Naive thymus-derived CD4-positive, alpha-beta T cell (primary cell): ENCODE measurements at regions of chrX and their contacts with region 1.

Region 1: GRCh38 chrX:132071260-132071659 is 48.2 kb downstream of the STK26 start:
- DNase-seq: peak in 2 of 9 donors; percentile 9 to 18
- ATAC-seq: no peak
- H3K4me3 ChIP-seq: no peak overlapping the region
- H3K4me3 Mint-ChIP-seq: no peak overlapping the region
- H3K27ac ChIP-seq: no peak overlapping the region
- H3K27ac Mint-ChIP-seq: no peak overlapping the region
- H3K4me1 ChIP-seq: no peaks in the 10 kb centered on the region
- H3K4me1 Mint-ChIP-seq: peaks cover 0 to 3% (median 0%) of the 10 kb centered on the region in 7 donors
- H3K27me3 ChIP-seq: no peaks in the 10 kb centered on the region
- H3K27me3 Mint-ChIP-seq: no peaks in the 10 kb centered on the region

Region 2: DNA sequence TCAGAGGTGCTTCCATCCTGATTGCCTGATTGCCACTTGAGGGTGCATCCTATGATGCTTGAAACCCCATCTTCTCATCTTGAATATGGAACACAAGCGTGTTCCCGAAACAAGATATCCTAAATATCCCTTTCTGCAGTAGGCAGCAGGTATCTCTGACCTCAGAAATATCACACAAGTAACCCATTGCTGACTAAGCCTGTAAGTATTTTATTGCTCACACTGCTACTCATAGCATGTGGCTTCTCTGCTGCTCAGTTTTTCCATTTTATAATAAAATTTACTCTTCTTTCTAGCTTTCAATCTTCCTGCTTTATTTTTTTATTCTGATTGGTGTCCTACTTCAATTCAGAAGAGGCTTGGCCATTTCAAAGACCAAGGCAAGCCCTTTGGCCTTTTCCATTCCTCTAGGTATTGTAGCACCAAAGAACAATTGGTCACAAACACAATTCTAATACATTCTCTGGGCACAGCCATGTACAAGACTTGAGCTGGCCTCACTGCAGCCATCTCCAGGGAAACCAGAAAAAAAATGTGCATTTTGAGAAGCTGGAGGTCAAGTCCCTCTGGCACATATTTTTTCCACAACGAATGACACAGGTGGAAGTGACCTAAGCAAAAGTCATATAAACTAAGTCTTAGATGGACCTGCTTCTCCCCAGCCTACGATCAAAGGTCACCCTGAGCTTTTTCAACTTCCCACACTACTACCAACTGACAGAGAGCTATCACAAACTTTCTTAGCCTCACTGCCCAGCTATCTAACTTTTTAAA is 420.4 kb before region 1 on chrX:
- CTCF ChIA-PET with region 1: no interaction called
- POLR2A ChIA-PET with region 1: no interaction called
- intact Hi-C with region 1: no loop called
- DNase-seq: no peak
- ATAC-seq: no peak
- H3K4me3 ChIP-seq: no peak overlapping the region
- H3K4me3 Mint-ChIP-seq: no peak overlapping the region
- H3K27ac ChIP-seq: no peak overlapping the region
- H3K27ac Mint-ChIP-seq: no peak overlapping the region
- H3K4me1 ChIP-seq: no peaks in the 10 kb centered on the region
- H3K4me1 Mint-ChIP-seq: no peaks in the 10 kb centered on the region
- H3K27me3 ChIP-seq: no peaks in the 10 kb centered on the region
- H3K27me3 Mint-ChIP-seq: peaks cover 0 to 14% (median 8%) of the 10 kb centered on the region in 5 donors

Region 3: DNA sequence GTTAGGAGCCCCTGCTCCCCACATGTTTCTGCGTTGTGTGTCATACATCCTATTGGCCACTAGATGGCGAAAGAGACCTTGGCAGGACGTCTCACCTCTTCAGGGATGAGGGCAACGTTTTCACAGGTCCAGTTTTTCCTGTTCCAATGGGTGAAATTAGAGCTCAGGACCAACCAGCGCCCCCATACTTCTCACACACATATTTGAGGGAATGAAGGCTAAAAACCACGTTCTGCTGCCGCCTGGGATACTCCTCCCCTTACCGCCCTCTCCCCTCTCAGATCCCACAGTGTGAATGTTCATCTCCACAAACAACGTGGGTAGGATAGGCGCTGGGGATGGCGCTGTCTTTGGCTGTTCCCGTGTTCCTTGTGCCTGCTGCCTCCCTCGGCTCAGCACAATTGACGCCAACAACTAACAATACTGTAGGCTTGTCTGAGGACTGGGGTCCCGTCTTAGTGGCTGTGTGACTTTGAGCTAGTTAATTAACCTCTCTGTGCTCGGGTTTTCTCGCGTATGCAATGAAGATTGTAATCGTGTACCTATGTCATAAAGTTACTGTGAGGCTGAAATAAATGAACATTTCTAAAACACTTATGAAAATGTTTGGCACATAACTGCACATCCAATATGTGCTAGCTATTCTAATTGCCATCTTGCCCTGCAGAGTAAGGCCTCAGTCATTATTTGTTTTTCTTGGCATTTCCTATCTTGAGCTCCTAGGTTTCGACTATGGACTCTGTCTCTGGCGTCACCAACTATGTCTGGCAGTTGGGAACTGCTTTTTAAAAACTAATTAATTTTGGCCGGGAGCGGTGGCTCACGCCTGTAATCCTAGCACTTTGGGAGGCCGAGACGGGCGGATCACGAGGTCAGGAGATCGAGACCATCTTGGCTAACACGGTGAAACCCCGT is 229.5 kb before region 1 on chrX:
- CTCF ChIA-PET with region 1: interaction called, 5 read pairs
- POLR2A ChIA-PET with region 1: no interaction called
- intact Hi-C with region 1: loop called (anchors 1 to 2 kb)
- DNase-seq: peak in 8 of 9 donors; percentile 5 to 67 (median 49)
- ATAC-seq: peak; percentile 81
- H3K4me3 ChIP-seq: no peak overlapping the region
- H3K4me3 Mint-ChIP-seq: peak overlapping the region in 1 of 10 donors; percentile 56
- H3K27ac ChIP-seq: no peak overlapping the region
- H3K27ac Mint-ChIP-seq: no peak overlapping the region
- H3K4me1 ChIP-seq: no peaks in the 10 kb centered on the region
- H3K4me1 Mint-ChIP-seq: peaks cover 0 to 9% (median 0%) of the 10 kb centered on the region in 7 donors
- H3K27me3 ChIP-seq: no peaks in the 10 kb centered on the region
- H3K27me3 Mint-ChIP-seq: peaks cover 0 to 2% (median 0%) of the 10 kb centered on the region in 5 donors

Region 4: GRCh38 chrX:131854581-131854980 is 216.7 kb before region 1 on chrX:
- CTCF ChIA-PET with region 1: interaction called, 8 read pairs
- POLR2A ChIA-PET with region 1: no interaction called
- intact Hi-C with region 1: loop called in 1 of 2 experiments (anchors 1 kb)
- DNase-seq: peak in 5 of 9 donors; percentile 25 to 48 (median 36)
- ATAC-seq: no peak
- H3K4me3 ChIP-seq: no peak overlapping the region
- H3K4me3 Mint-ChIP-seq: no peak overlapping the region
- H3K27ac ChIP-seq: no peak overlapping the region
- H3K27ac Mint-ChIP-seq: peak overlapping the region in 1 of 9 donors; percentile 70
- H3K4me1 ChIP-seq: no peaks in the 10 kb centered on the region
- H3K4me1 Mint-ChIP-seq: no peaks in the 10 kb centered on the region
- H3K27me3 ChIP-seq: no peaks in the 10 kb centered on the region
- H3K27me3 Mint-ChIP-seq: no peaks in the 10 kb centered on the region

Region 5: DNA sequence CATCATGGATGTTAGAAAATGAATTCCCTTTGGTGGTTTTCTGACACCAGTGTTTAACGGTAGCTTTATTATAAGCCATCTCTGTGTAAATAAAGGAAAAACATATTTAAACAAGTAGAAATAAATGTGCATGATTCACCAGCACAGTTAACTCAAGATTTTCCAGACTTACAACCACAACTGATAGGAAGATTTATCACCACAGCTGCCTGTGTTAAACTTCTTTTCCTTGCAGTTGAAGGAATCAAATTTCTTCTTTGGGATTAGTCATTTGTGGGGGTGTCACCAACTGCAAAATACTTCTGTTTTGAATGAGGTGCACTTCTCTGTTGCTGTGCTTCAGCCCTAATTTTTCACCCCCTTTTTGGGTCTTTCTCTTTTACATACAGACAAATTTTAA is 176.3 kb before region 1 on chrX:
- CTCF ChIA-PET with region 1: interaction called, 6 read pairs
- POLR2A ChIA-PET with region 1: no interaction called
- intact Hi-C with region 1: loop called in 1 of 2 experiments (anchors 5 kb)
- DNase-seq: no peak
- ATAC-seq: no peak
- H3K4me3 ChIP-seq: no peak overlapping the region
- H3K4me3 Mint-ChIP-seq: no peak overlapping the region
- H3K27ac ChIP-seq: no peak overlapping the region
- H3K27ac Mint-ChIP-seq: no peak overlapping the region
- H3K4me1 ChIP-seq: no peaks in the 10 kb centered on the region
- H3K4me1 Mint-ChIP-seq: peaks cover 0 to 3% (median 0%) of the 10 kb centered on the region in 7 donors
- H3K27me3 ChIP-seq: no peaks in the 10 kb centered on the region
- H3K27me3 Mint-ChIP-seq: no peaks in the 10 kb centered on the region